ENCODE measurements at regions of chr12 and their contacts with region 1.

Region 1: GRCh38 chr12:12562585-12563261 is at the start of gene DUSP16:
- DNase-seq: peak; percentile 98
- H3K4me3 ChIP-seq: peak within 1 kb of the TSS; percentile 90 to 96 (median 94)
- H3K27ac ChIP-seq: peak within 1 kb of the TSS; percentile 100
- H3K4me1 ChIP-seq: peaks cover 16 to 44% (median 41%) of the 10 kb centered on the region in 4 donors
- H3K27me3 ChIP-seq: no peaks in the 10 kb centered on the region
- CTCF ChIP-seq: peak; percentile 23 to 29 (median 23)
- EP300 ChIP-seq: no peak
- POLR2A ChIP-seq: no peak
- total RNA-seq, gene DUSP16: 10.0 to 17.0 (median 13.9) TPM

Region 2: DNA sequence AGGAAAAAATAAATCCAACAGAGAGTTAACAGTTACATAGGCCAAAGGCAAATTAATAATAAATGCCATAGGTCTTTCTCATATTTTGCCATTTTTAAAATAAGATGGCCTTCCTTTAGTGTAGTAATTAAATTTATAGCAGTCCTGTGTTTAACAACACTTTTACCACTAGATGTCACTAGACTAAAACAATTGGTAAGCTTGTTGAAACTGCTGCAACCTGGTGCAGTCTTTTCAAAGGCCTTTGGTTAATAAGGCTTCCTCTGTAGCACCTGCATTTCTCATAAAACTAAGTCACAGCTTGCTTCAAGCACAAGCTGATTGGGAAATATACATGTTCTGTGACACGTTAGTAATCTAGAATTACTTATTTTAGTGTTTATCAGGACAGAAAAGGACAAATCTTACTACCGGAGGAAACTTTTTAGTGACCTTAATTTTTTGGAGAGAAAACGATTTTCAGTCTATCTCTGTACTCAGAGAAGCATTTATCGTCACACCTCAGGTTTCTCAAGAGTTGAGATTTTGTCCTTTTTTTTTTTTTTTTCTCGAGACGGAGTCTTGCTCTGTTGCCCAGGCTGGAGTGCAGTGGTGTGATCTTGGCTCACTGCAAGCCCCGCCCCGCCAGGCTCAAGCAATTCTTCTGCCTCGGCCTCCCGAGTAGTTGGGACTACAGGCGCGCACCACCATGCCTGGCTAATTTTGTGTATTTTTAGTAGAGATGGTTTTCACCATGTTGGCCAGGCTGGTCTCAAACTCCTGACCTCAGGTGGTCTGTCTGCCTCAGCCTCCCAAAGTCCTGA is 185.9 kb before region 1 on chr12:
- intact Hi-C with region 1: loop called (anchors 2 kb)
- DNase-seq: no peak
- H3K4me3 ChIP-seq: no peak overlapping the region
- H3K27ac ChIP-seq: no peak overlapping the region
- H3K4me1 ChIP-seq: peaks cover 0 to 12% (median 10%) of the 10 kb centered on the region in 4 donors
- H3K27me3 ChIP-seq: no peaks in the 10 kb centered on the region
- CTCF ChIP-seq: peak; percentile 70 to 75 (median 73)
- EP300 ChIP-seq: no peak
- POLR2A ChIP-seq: no peak

Region 3: DNA sequence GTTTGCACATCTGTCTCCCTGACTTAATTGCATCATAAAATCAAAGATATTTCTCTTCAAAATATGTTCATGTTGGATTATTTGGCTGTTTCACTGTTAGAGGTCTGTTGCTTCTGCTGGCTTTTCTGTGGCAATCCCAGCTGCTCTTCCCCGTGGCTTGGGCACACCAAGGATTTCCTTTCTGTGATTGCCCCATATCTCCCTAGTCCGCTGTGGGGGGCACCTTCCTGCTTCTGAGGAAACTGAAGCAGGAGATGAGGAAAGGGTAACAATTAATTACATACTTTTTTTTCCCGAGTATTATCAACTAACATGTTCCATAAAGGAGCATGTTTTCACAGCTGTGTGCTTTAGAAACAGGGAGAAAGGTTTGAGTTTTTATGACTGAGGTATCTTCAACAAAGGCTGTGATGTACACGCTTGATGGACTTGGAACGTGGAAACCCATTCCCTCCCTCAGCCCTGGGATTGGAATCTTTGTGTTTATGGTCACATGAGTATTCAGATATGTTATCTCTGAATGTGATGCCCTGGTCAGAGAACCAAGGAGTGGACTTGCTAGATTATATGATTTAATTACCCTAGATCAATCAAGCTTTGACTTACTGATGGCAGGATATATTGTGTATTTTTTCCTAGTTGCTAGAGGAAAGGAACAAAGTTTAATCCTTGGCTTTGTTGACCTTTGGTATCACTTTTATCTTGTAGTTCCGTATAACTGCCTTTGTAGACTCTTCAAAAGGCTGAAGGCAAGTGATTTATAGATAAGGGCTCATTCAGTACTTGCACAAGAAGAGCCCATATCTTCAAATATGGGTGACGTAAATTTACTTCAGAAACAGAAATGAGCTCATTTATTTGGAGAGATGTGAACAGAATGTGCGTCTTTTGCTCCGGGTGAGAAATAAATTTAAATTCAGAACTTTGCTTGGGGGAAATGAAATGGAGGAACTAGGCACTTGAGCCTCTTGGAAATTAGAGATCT is 159.2 kb before region 1 on chr12:
- intact Hi-C with region 1: loop called (anchors 5 kb)
- DNase-seq: no peak
- H3K4me3 ChIP-seq: no peak overlapping the region
- H3K27ac ChIP-seq: peak overlapping the region in 3 of 4 donors; percentile 1 to 54 (median 40)
- H3K4me1 ChIP-seq: peaks cover 12 to 42% (median 28%) of the 10 kb centered on the region in 4 donors
- H3K27me3 ChIP-seq: no peaks in the 10 kb centered on the region
- CTCF ChIP-seq: no peak
- EP300 ChIP-seq: no peak
- POLR2A ChIP-seq: no peak

Region 4: GRCh38 chr12:12611512-12612306 is 49.0 kb after region 1 on chr12 and contains the start of gene CREBL2:
- intact Hi-C with region 1: loop called (anchors 5 kb)
- DNase-seq: peak; percentile 98
- H3K4me3 ChIP-seq: peak within 1 kb of the TSS; percentile 76 to 85 (median 79)
- H3K27ac ChIP-seq: peak within 1 kb of the TSS; percentile 91 to 96 (median 93)
- H3K4me1 ChIP-seq: peaks cover 20 to 50% (median 46%) of the 10 kb centered on the region in 4 donors
- H3K27me3 ChIP-seq: no peaks in the 10 kb centered on the region
- CTCF ChIP-seq: no peak
- EP300 ChIP-seq: no peak
- POLR2A ChIP-seq: no peak
- total RNA-seq, gene CREBL2: 33.0 to 53.5 (median 45.9) TPM

Region 5: DNA sequence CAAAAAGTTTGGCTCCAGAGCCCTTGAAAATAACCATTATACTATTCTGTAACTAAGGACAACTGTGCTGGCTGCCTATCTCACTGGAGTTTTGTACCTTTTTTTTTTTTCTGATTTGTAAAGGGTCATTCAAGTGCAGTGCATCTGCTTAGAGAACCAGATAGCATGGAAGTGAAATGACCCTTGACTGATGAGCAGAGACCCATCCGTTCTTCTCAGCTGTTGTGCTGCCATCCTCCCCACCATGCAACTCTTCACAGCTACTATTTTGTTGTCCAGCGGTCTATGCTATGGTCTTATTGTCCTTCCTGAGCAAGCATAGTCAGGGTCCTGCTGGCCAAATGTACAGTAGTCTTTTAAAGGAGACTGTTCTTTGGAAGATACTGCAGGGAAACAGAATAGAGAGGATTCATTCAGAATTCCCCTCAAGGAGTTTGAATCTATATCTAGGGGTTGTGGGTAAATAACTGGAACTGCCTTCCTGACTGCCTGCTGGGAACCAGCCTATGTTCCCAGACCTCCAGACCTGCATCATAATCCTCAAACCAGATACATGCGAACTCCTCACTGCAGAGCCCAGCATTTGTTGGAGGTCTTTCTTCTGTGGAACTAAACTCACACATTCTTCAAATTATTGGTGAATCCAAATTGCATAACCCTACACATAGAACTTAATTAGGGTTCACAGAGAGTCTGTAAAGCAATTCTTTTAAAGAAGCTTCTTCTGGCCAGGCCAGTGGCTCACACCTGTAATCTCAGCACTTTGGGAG is 92.2 kb after region 1 on chr12:
- intact Hi-C with region 1: loop called (anchors 5 kb)
- DNase-seq: no peak
- H3K4me3 ChIP-seq: no peak overlapping the region
- H3K27ac ChIP-seq: no peak overlapping the region
- H3K4me1 ChIP-seq: peaks cover 0 to 5% (median 4%) of the 10 kb centered on the region in 4 donors
- H3K27me3 ChIP-seq: no peaks in the 10 kb centered on the region
- CTCF ChIP-seq: no peak
- EP300 ChIP-seq: no peak
- POLR2A ChIP-seq: no peak

Region 6: GRCh38 chr12:12704593-12705230 is 142.0 kb after region 1 on chr12:
- intact Hi-C with region 1: loop called (anchors 5 kb)
- DNase-seq: no peak
- H3K4me3 ChIP-seq: no peak overlapping the region
- H3K27ac ChIP-seq: no peak overlapping the region
- H3K4me1 ChIP-seq: peaks cover 0 to 12% (median 8%) of the 10 kb centered on the region in 4 donors
- H3K27me3 ChIP-seq: no peaks in the 10 kb centered on the region
- CTCF ChIP-seq: peak; percentile 85 to 99 (median 91)
- EP300 ChIP-seq: no peak
- POLR2A ChIP-seq: no peak

Region 7: GRCh38 chr12:12716793-12717585 is 154.3 kb after region 1 on chr12 and contains the start of gene CDKN1B:
- intact Hi-C with region 1: loop called (anchors 5 kb)
- DNase-seq: peak; percentile 98
- H3K4me3 ChIP-seq: peak within 1 kb of the TSS; percentile 75 to 95 (median 86)
- H3K27ac ChIP-seq: peak within 1 kb of the TSS; percentile 98 to 100 (median 100)
- H3K4me1 ChIP-seq: peaks cover 54 to 67% (median 63%) of the 10 kb centered on the region in 4 donors
- H3K27me3 ChIP-seq: no peaks in the 10 kb centered on the region
- CTCF ChIP-seq: no peak
- EP300 ChIP-seq: no peak
- POLR2A ChIP-seq: peak; percentile 49
- total RNA-seq, gene CDKN1B: 48.7 to 97.4 (median 70.6) TPM

Measured in esophagus muscularis mucosa (tissue), 4 donors.